HepG2 (cell line): ENCODE measurements at regions of chr15 and their contacts with region 1.

Region 1: DNA sequence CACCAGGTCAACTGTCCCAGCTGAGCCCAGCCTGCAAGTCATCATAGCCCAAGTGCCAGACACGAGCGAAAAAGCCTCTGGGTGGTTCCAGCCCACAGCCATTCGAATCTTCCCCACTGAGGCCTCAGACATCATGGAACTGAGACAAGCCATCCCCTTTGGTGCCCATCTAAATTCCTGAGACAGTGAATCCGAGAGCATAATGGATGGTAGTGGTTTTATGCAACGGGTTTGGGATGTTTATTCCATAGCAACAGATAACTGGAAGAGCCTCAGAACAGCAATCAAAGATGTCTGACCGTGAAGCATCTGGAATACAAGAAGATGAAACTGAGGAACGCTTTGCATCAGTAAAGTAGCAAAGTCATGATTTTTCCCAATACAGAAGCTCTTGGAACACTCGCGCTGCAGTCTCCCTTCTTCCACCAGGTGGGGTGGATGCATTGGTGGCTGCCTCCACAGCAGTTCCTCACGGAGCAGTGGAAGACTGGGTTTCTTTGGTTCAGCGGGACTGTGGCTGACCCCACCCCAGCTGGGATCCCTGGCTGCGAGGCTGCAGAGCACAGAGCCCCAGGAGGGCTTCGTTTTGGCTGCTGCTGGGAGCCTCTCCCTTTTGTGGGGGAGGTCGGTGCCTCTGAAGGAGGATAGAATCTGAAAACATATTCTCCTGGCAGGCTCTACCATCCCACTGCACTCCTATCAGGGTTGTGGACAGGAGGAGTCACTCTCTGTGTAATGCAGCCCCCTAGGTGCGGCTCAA is 26.4 kb upstream of the PDE8A start:
- DNase-seq: peak; percentile 71
- ATAC-seq: peak; percentile 97
- H3K4me3 ChIP-seq: peak overlapping the region; percentile 38 to 66 (median 46)
- H3K27ac ChIP-seq: no peak overlapping the region
- H3K4me1 ChIP-seq: peaks cover 49% of the 10 kb centered on the region
- H3K27me3 ChIP-seq: peaks cover 0 to 5% of the 10 kb centered on the region in 2 experiments; a peak in 1 of 5 replicates
- CTCF ChIP-seq: peak; percentile 91
- EP300 ChIP-seq: no peak
- POLR2A ChIP-seq: no peak
- RAD21 ChIP-seq: peak; percentile 88

Region 2: GRCh38 chr15:84970843-84971242 is 15.6 kb after region 1 on chr15:
- CTCF ChIA-PET with region 1: no interaction called
- POLR2A ChIA-PET with region 1: no interaction called
- in situ Hi-C with region 1: no loop called
- intact Hi-C with region 1: loop called (anchors 2 kb)
- DNase-seq: no peak
- ATAC-seq: no peak
- H3K4me3 ChIP-seq: no peak overlapping the region
- H3K27ac ChIP-seq: no peak overlapping the region
- H3K4me1 ChIP-seq: peaks cover 8% of the 10 kb centered on the region; the same call in 1 of the 2 replicates
- H3K27me3 ChIP-seq: peaks cover 1 to 31% of the 10 kb centered on the region in 2 experiments; a peak in 4 of 5 replicates
- CTCF ChIP-seq: no peak
- EP300 ChIP-seq: no peak
- POLR2A ChIP-seq: no peak
- RAD21 ChIP-seq: no peak

Region 3: GRCh38 chr15:84987949-84988624 is 32.8 kb after region 1 on chr15:
- CTCF ChIA-PET with region 1: no interaction called
- POLR2A ChIA-PET with region 1: no interaction called
- in situ Hi-C with region 1: no loop called
- intact Hi-C with region 1: no loop called
- DNase-seq: no peak
- ATAC-seq: no peak
- H3K4me3 ChIP-seq: no peak overlapping the region
- H3K27ac ChIP-seq: no peak overlapping the region
- H3K4me1 ChIP-seq: peaks cover 64% of the 10 kb centered on the region
- H3K27me3 ChIP-seq: no peaks in the 10 kb centered on the region
- CTCF ChIP-seq: no peak
- EP300 ChIP-seq: no peak
- POLR2A ChIP-seq: no peak
- RAD21 ChIP-seq: no peak

Region 4: DNA sequence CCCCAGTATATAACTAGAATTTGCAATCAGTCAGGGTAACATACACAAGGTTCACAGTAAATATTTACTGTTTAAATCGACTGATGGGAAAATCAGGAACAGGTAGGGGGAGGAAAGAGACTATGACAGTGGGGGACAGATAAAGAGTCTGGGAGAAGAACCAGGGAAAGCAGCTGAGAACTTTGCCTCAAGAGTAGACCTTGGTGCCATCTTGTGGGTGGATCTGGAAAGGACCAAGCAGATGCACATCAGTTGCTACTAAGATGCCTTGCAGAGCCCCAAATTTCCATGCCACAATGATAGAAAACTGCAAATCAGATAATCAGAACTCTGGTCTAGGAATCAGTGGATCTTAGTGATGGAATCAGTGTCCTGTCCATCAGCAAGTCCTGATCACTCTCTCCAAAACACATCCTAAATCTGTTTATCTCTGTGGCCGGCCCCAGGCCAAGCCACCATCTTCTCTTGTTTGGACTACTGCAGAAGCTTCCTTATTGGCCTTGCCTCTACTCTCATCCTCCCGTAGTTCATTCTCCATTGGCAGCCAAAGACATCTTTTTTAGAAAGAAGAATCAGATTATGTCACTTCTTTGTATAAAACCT is 89.1 kb after region 1 on chr15:
- CTCF ChIA-PET with region 1: interaction called, 21 read pairs
- POLR2A ChIA-PET with region 1: no interaction called
- in situ Hi-C with region 1: loop called (anchors 5 kb)
- intact Hi-C with region 1: loop called (anchors 1 kb)
- DNase-seq: peak; percentile 63
- ATAC-seq: peak; percentile 68
- H3K4me3 ChIP-seq: no peak overlapping the region
- H3K27ac ChIP-seq: no peak overlapping the region
- H3K4me1 ChIP-seq: peaks cover 79% of the 10 kb centered on the region
- H3K27me3 ChIP-seq: no peaks in the 10 kb centered on the region
- CTCF ChIP-seq: peak; percentile 84
- EP300 ChIP-seq: no peak
- POLR2A ChIP-seq: no peak
- RAD21 ChIP-seq: peak; percentile 80

Region 5: GRCh38 chr15:85125056-85125661 is 169.9 kb after region 1 on chr15:
- CTCF ChIA-PET with region 1: no interaction called
- POLR2A ChIA-PET with region 1: no interaction called
- in situ Hi-C with region 1: loop called (anchors 25 kb)
- intact Hi-C with region 1: no loop called
- DNase-seq: no peak
- ATAC-seq: no peak
- H3K4me3 ChIP-seq: no peak overlapping the region
- H3K27ac ChIP-seq: no peak overlapping the region
- H3K4me1 ChIP-seq: no peaks in the 10 kb centered on the region
- H3K27me3 ChIP-seq: no peaks in the 10 kb centered on the region
- CTCF ChIP-seq: no peak
- EP300 ChIP-seq: no peak
- POLR2A ChIP-seq: no peak
- RAD21 ChIP-seq: no peak

Region 6: DNA sequence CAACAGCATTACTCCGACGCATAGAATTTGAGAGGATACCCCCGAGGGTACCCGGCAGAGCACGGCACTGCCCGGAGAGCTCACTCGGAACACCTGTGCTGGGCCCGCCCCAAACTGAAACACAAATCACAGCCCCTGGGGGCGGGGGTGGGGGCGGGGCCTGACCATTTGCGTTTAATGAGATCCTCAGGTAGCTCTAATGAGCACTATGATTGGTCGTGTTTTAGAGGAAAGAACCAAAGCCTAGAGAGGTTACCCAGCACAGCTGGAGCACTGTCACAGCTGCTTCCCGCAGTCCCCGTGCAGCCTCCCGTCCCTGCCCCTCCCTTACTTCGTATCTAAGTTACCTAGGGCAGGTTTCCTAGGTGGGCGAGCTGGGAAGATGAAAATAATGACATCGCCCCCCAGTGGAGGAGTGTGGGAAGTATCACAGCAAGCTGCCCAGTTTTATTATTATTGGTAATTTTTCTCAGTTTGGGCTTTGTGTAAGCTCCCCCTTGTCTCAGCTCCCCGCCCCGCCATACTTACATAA is 213.4 kb after region 1 on chr15:
- CTCF ChIA-PET with region 1: interaction called, 4 read pairs
- POLR2A ChIA-PET with region 1: no interaction called
- in situ Hi-C with region 1: no loop called
- intact Hi-C with region 1: loop called (anchors 1 kb)
- DNase-seq: peak; percentile 24
- ATAC-seq: peak; percentile 77
- H3K4me3 ChIP-seq: peak overlapping the region; percentile 46 to 61 (median 47)
- H3K27ac ChIP-seq: no peak overlapping the region
- H3K4me1 ChIP-seq: peaks cover 22% of the 10 kb centered on the region
- H3K27me3 ChIP-seq: no peaks in the 10 kb centered on the region; a peak in 1 of 5 replicates
- CTCF ChIP-seq: peak; percentile 63
- EP300 ChIP-seq: no peak
- POLR2A ChIP-seq: no peak
- RAD21 ChIP-seq: no peak